Mammary epithelial cell (primary cell): ENCODE measurements at regions of chr1 and their contacts with region 1.

Region 1: DNA sequence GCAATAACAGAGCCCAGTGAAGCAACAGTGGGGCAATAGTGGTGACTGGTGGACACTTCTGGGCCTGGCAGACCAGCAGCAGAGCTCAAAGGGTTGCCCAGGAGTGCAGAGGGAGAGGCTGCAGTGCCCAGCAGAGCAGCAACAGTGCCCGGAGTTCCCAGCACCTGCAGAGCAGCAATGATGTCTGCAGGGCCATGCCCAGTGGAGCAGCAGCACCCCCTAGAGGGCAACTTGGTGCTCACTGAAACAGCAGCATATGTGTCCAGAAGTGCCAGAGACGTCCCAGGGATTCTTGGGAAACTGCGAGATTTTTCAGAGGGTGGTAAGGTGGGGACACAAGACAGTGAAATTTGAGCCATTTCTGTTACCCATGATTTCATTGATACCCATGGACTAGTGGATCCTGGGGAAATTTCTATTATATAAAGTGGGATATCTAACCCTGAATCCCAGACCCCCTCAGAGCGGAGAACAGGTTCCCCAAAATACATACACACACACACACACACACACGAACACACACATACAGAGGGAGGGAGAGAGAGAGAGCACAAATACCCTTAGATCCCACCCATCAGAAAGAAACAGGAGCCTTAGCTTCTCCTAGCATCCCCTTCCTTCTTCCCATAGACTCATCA is 156.9 kb upstream of the GJB5 start:
- DNase-seq: peak; percentile 42
- H3K4me3 ChIP-seq: no peak overlapping the region
- H3K27ac ChIP-seq: no peak overlapping the region
- H3K4me1 ChIP-seq: no peaks in the 10 kb centered on the region
- H3K27me3 ChIP-seq: no peaks in the 10 kb centered on the region
- CTCF ChIP-seq: peak; percentile 91 to 95

Region 2: DNA sequence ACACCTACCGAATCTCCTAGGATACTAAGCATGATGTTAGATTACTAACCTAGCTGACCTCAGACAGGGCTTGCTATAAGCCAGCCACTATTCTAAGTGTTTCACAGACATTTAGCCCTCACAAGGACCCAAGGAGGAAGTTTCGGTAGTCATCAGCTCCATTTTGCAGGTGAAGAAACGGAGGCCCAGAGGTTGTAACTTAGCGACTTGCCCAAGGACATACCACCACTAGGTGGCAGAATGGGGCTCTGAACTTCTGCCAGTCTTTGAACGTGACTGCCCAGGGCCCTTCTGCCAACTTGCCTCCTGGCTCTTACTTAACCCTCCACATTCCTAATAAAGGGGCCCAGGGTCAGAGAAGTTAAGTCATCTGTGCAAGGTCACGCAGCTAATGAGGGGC is 137.8 kb before region 1 on chr1:
- CTCF ChIA-PET with region 1: no interaction called
- dilution Hi-C with region 1: no loop called
- in situ Hi-C with region 1: no loop called
- intact Hi-C with region 1: loop called (anchors 2 kb)
- DNase-seq: no peak
- H3K4me3 ChIP-seq: no peak overlapping the region
- H3K27ac ChIP-seq: no peak overlapping the region
- H3K4me1 ChIP-seq: no peaks in the 10 kb centered on the region
- H3K27me3 ChIP-seq: no peaks in the 10 kb centered on the region
- CTCF ChIP-seq: peak; percentile 41 to 50

Region 3: DNA sequence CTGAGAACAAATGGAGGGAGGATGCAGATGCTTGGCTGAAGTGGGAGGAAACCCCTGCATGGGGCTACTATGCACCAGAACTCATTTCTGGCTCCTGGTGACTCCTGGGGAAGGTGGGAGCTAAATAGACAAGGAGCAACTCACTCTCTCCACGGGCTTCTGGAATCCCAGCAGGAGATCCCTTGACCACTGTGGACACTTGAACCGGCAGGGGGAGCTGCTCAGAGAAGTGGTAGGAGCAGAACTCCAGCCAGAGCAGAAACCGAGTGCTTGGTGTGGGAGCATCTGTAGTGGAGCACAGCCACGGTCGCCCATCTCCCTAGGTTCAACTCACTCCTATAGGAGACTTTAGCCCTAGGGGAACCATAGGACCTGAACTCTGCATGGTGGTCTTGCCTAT is 48.8 kb before region 1 on chr1:
- CTCF ChIA-PET with region 1: no interaction called
- dilution Hi-C with region 1: no loop called
- in situ Hi-C with region 1: no loop called
- intact Hi-C with region 1: loop called (anchors 5 kb)
- DNase-seq: peak; percentile 18
- H3K4me3 ChIP-seq: no peak overlapping the region
- H3K27ac ChIP-seq: no peak overlapping the region
- H3K4me1 ChIP-seq: no peaks in the 10 kb centered on the region
- H3K27me3 ChIP-seq: no peaks in the 10 kb centered on the region
- CTCF ChIP-seq: peak; percentile 15 to 47